ENCODE measurements at regions of chrX and their contacts with region 1.

Region 1: DNA sequence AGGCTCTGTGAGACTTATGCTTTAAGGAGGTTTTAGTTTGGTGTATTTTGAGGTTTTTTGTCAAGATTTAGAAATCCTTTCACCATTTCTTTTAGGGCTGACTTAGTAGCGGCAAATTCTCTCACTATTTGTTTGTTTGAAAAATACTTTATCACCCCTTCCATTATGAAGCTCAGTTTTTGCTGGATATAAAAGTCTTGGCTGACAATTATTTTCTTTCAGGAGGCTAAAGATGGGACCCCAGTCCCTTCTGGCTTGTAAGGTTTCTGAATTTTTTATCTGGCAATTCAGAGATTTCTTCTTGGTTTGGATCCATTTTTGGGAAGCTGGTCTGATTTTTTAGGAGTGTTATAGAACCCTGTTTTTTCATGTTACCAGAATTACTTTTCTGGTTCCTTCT is 88.5 kb downstream of the ACTRT1 start:
- DNase-seq: no peak
- ATAC-seq: no peak
- H3K4me3 ChIP-seq: no peak overlapping the region
- H3K27ac ChIP-seq: no peak overlapping the region
- H3K4me1 ChIP-seq: no peaks in the 10 kb centered on the region
- H3K27me3 ChIP-seq: no peaks in the 10 kb centered on the region
- CTCF ChIP-seq: no peak

Region 2: GRCh38 chrX:126967225-126967624 is 996.5 kb before region 1 on chrX:
- intact Hi-C with region 1: no loop called
- DNase-seq: no peak
- ATAC-seq: no peak
- H3K4me3 ChIP-seq: no peak overlapping the region
- H3K27ac ChIP-seq: no peak overlapping the region
- H3K4me1 ChIP-seq: no peaks in the 10 kb centered on the region
- H3K27me3 ChIP-seq: no peaks in the 10 kb centered on the region
- CTCF ChIP-seq: no peak

Region 3: DNA sequence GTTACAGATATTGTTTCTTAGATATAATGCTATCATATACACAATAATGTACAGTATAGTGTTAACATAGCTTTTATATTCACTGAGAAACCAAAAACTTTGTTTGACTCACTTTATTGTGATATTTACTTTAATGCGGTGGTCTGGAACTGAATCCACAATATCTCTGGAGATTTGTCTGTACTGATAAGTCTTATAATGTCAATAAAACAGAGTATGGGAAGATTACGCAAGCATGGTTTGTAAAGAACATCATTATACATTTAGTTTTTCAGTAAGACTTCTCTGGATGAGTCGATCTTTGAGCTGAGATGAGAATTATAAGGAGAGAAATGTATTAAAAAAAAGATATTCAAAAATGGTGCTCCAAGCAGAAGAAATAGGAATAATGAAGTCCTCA is 45.5 kb after region 1 on chrX:
- intact Hi-C with region 1: loop called in 1 of 10 experiments (anchors 2 kb)
- DNase-seq: no peak
- ATAC-seq: no peak
- H3K4me3 ChIP-seq: no peak overlapping the region
- H3K27ac ChIP-seq: no peak overlapping the region
- H3K4me1 ChIP-seq: no peaks in the 10 kb centered on the region
- H3K27me3 ChIP-seq: no peaks in the 10 kb centered on the region
- CTCF ChIP-seq: no peak

Region 4: GRCh38 chrX:128020708-128021107 is 57.0 kb after region 1 on chrX:
- intact Hi-C with region 1: no loop called
- DNase-seq: no peak
- ATAC-seq: no peak
- H3K4me3 ChIP-seq: no peak overlapping the region
- H3K27ac ChIP-seq: no peak overlapping the region
- H3K4me1 ChIP-seq: no peaks in the 10 kb centered on the region
- H3K27me3 ChIP-seq: no peaks in the 10 kb centered on the region
- CTCF ChIP-seq: no peak

Region 5: GRCh38 chrX:128664211-128664610 is 700.5 kb after region 1 on chrX:
- intact Hi-C with region 1: no loop called
- DNase-seq: no peak
- ATAC-seq: no peak
- H3K4me3 ChIP-seq: no peak overlapping the region
- H3K27ac ChIP-seq: no peak overlapping the region
- H3K4me1 ChIP-seq: no peaks in the 10 kb centered on the region
- H3K27me3 ChIP-seq: no peaks in the 10 kb centered on the region
- CTCF ChIP-seq: no peak